ENCODE measurements at regions of chr20 and their contacts with region 1.

Region 1: GRCh38 chr20:50379049-50379990 is 130.9 kb upstream of the PTPN1 start:
- DNase-seq: peak; percentile 93
- ATAC-seq: peak; percentile 84
- H3K4me3 ChIP-seq: peak overlapping the region; percentile 28
- H3K27ac ChIP-seq: peak overlapping the region; percentile 82
- H3K4me1 ChIP-seq: peaks cover 52% of the 10 kb centered on the region
- H3K27me3 ChIP-seq: no peaks in the 10 kb centered on the region
- CTCF ChIP-seq: no peak

Region 2: GRCh38 chr20:50278674-50279531 is 100.4 kb before region 1 on chr20:
- intact Hi-C with region 1: loop called (anchors 10 kb)
- DNase-seq: peak; percentile 92
- ATAC-seq: peak; percentile 59
- H3K4me3 ChIP-seq: no peak overlapping the region
- H3K27ac ChIP-seq: peak overlapping the region; percentile 68
- H3K4me1 ChIP-seq: peaks cover 49% of the 10 kb centered on the region
- H3K27me3 ChIP-seq: no peaks in the 10 kb centered on the region
- CTCF ChIP-seq: peak; percentile 46